Activated CD4-positive, alpha-beta T cell treated with anti-CD3 and anti-CD28 coated beads for 36 hours (primary cell): ENCODE measurements at regions of chr20 and their contacts with region 1.

Region 1: GRCh38 chr20:45971675-45972499 is at the start of gene ZNF335:
- DNase-seq: peak; percentile 96
- ATAC-seq: peak; percentile 88
- H3K4me3 Mint-ChIP-seq: peak within 1 kb of the TSS; percentile 94
- H3K27ac Mint-ChIP-seq: peak within 1 kb of the TSS; percentile 98
- H3K4me1 Mint-ChIP-seq: peaks cover 15% of the 10 kb centered on the region
- H3K27me3 Mint-ChIP-seq: no peaks in the 10 kb centered on the region
- total RNA-seq, gene ZNF335: 27.4 to 28.9 TPM

Region 2: GRCh38 chr20:44210422-44211176 is 1761.3 kb before region 1 on chr20 and contains the start of gene OSER1:
- CTCF ChIA-PET with region 1: no interaction called
- POLR2A ChIA-PET with region 1: no interaction called
- intact Hi-C with region 1: loop called in 1 of 2 experiments (anchors 2 kb)
- DNase-seq: peak; percentile 98
- ATAC-seq: peak; percentile 82
- H3K4me3 Mint-ChIP-seq: peak within 1 kb of the TSS; percentile 94
- H3K27ac Mint-ChIP-seq: peak within 1 kb of the TSS; percentile 92
- H3K4me1 Mint-ChIP-seq: peaks cover 48% of the 10 kb centered on the region
- H3K27me3 Mint-ChIP-seq: no peaks in the 10 kb centered on the region
- total RNA-seq, gene OSER1: 19.9 to 22.5 TPM

Region 3: GRCh38 chr20:45647441-45648050 is 324.3 kb before region 1 on chr20:
- CTCF ChIA-PET with region 1: no interaction called
- POLR2A ChIA-PET with region 1: no interaction called
- intact Hi-C with region 1: no loop called
- DNase-seq: no peak
- ATAC-seq: no peak
- H3K4me3 Mint-ChIP-seq: no peak overlapping the region
- H3K27ac Mint-ChIP-seq: no peak overlapping the region
- H3K4me1 Mint-ChIP-seq: no peaks in the 10 kb centered on the region
- H3K27me3 Mint-ChIP-seq: peaks cover 7% of the 10 kb centered on the region

Region 4: GRCh38 chr20:45792332-45792686 is 179.6 kb before region 1 on chr20:
- CTCF ChIA-PET with region 1: no interaction called
- POLR2A ChIA-PET with region 1: interaction called, 3 read pairs
- intact Hi-C with region 1: loop called in 1 of 2 experiments (anchors 2 kb)
- DNase-seq: peak; percentile 12
- ATAC-seq: peak; percentile 2
- H3K4me3 Mint-ChIP-seq: peak overlapping the region; percentile 81
- H3K27ac Mint-ChIP-seq: peak overlapping the region; percentile 80
- H3K4me1 Mint-ChIP-seq: peaks cover 13% of the 10 kb centered on the region
- H3K27me3 Mint-ChIP-seq: no peaks in the 10 kb centered on the region

Region 5: DNA sequence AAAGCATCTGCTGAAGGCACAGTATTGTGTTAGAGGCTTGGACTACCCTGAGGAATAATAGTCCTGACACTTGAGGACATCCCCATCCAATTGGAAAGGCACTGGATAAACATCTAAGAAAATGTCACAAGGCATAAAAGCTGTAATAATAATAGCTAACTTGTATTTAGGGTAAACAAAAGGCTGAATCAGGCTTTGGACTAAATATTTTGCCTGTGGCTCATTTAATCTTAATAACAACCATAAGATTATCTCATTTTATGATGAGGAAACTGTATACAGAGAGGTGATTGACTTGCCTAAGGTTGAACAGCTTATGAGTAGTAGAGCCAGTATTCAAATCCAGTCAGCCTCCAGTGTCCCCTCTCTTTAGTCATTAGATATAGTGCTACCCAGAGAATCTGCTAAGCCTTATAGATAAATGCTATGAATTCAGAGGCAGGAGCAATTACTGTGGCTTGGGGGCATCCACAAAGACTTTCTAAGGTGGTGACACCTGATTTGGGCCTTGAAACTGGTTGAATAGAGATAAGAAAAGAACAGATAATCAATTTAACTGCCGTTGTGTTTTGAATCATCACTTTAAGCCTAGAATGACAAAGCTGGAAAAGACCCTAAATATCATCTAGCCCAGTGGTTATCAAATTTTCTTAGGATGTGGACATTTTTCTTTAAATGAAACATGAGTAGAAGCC is 98.3 kb before region 1 on chr20:
- CTCF ChIA-PET with region 1: no interaction called
- POLR2A ChIA-PET with region 1: no interaction called
- intact Hi-C with region 1: no loop called
- DNase-seq: no peak
- ATAC-seq: no peak
- H3K4me3 Mint-ChIP-seq: no peak overlapping the region
- H3K27ac Mint-ChIP-seq: no peak overlapping the region
- H3K4me1 Mint-ChIP-seq: no peaks in the 10 kb centered on the region
- H3K27me3 Mint-ChIP-seq: no peaks in the 10 kb centered on the region

Region 6: GRCh38 chr20:45890985-45891983 is 80.6 kb before region 1 on chr20 and contains the starts of genes CTSA and NEURL2:
- CTCF ChIA-PET with region 1: no interaction called
- POLR2A ChIA-PET with region 1: no interaction called
- intact Hi-C with region 1: loop called (anchors 1 to 2 kb)
- DNase-seq: peak; percentile 94
- ATAC-seq: peak; percentile 80
- H3K4me3 Mint-ChIP-seq: peak within 1 kb of the TSS; percentile 89
- H3K27ac Mint-ChIP-seq: peak within 1 kb of the TSS; percentile 87
- H3K4me1 Mint-ChIP-seq: peaks cover 32% of the 10 kb centered on the region
- H3K27me3 Mint-ChIP-seq: no peaks in the 10 kb centered on the region
- total RNA-seq, gene CTSA: 36.4 to 45.6 TPM
- total RNA-seq, gene NEURL2: 1.2 to 1.9 TPM

Region 7: GRCh38 chr20:45957081-45957941 is 14.6 kb before region 1 on chr20:
- CTCF ChIA-PET with region 1: interaction called, 14 read pairs
- POLR2A ChIA-PET with region 1: interaction called, 12 read pairs
- intact Hi-C with region 1: no loop called
- DNase-seq: no peak
- ATAC-seq: no peak
- H3K4me3 Mint-ChIP-seq: no peak overlapping the region
- H3K27ac Mint-ChIP-seq: no peak overlapping the region
- H3K4me1 Mint-ChIP-seq: no peaks in the 10 kb centered on the region
- H3K27me3 Mint-ChIP-seq: no peaks in the 10 kb centered on the region

Region 8: DNA sequence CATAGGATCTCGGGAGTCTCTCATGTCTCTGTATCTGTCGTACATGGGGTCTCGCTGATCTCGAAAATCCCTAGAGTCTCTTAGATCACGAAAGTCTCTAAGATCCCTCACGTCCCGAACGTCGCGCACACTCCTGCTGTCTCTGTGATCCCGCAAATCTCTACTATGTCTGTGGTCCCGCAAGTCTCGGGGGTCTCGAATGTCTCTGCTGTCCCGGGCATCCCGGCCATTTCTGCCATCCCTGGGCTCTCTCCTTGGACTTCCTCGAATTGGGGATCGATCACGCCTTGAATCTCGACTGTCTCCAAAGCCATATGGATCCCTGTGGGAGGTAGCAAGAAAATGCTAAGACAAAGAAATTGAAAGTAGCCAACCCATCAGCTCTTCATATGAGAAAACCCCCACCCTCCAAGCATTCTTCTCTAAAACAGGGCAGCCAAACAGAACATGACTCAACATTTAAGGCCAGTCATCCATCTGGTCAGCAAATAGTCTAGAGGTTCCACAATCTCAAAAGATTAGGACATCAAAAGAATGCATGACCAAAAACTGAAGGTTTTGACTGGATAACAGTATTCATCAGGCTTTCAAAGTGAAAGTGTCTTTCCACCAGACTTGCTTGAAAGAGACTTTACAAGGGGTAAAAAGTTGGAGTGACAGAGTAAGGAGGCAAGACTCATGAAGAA is 98.5 kb after region 1 on chr20:
- CTCF ChIA-PET with region 1: no interaction called
- POLR2A ChIA-PET with region 1: no interaction called
- intact Hi-C with region 1: no loop called
- DNase-seq: no peak
- ATAC-seq: no peak
- H3K4me3 Mint-ChIP-seq: no peak overlapping the region
- H3K27ac Mint-ChIP-seq: no peak overlapping the region
- H3K4me1 Mint-ChIP-seq: no peaks in the 10 kb centered on the region
- H3K27me3 Mint-ChIP-seq: no peaks in the 10 kb centered on the region

Region 9: DNA sequence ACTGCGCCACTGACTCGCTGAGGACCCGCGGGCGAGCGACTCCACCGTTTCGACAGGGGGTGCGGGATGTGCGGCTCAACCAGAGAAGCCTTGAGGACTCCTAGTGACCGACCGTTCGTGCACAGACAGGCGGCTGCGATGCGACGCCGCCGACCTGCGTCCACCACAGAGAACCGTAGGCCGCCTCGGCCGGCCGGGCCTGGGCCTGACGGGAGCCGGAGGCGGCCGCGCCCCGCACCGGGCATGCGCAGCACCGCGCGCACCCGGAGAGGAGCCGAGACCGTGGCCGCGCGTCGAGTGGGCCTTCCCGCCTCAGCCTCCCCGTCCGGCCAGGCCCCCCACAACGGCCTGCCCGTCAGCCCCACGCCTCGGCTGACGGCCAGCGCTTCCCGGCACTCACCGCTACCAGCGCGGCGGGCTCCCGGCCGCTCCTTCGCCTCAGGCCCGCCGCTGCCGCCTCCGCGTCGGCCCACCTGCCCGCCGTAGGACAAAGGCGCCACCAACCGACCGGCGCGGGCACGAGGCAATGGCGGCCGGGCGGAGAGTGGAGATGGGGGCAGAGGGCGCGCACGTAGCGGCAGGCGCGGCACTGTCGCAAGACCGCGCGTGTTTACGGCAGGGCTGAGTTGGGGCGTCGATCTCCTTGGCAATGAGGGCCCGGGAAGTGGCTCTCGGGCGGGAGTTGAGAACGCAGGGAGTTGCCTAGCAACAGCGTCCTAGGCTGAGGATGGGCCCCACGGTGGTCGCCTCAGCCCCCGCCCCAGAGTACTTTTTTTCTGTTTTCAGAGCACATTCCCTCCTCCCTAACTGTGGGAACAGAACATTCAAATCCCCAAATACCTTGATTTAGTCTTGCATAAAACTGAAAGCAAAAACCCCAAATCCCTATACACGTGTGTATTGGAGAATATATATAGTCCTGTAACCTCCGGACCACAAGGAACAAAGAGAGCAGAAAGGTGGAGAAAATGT is 117.8 kb after region 1 on chr20 and contains the start of gene NCOA5:
- CTCF ChIA-PET with region 1: interaction called, 7 read pairs
- POLR2A ChIA-PET with region 1: no interaction called
- intact Hi-C with region 1: loop called in 1 of 2 experiments (anchors 1 kb)
- DNase-seq: peak; percentile 97
- ATAC-seq: peak; percentile 87
- H3K4me3 Mint-ChIP-seq: peak within 1 kb of the TSS; percentile 86
- H3K27ac Mint-ChIP-seq: peak within 1 kb of the TSS; percentile 88
- H3K4me1 Mint-ChIP-seq: peaks cover 46% of the 10 kb centered on the region
- H3K27me3 Mint-ChIP-seq: no peaks in the 10 kb centered on the region
- total RNA-seq, gene NCOA5: 17.9 to 18.8 TPM

Region 10: DNA sequence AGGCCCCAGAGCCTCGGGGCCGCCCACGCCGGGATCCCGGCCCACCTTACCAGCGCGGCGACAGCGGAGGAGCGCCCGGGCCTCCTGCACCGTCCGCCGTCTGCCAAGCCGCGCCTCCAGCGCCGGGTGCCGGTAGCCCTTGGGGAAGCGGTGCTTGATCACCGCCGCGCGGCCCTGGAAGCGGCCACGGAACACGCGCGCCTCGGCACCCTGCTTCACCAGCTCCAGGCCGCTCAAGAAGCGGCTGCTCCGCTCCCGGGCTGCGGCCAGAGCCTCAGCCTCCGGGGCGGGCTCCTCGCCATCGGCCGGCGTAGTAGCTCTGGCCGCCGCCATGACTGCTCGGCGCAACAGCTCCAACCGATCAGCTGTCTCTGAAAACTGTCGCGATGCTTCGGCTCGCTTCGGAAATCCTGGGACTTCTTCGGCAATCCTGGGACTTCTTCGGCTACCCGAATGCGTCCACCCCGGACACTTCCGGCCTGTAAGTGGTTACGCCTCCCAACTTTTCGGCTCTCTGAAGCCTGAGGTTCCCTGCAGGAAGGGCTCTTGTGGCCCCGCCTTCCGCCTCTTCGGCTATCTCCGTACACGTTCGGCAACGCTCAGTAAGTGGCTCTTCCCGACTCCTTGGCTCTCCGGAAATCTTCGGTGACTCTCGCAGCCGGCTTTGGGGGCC is 717.3 kb after region 1 on chr20 and contains the start of gene TP53RK:
- CTCF ChIA-PET with region 1: no interaction called
- POLR2A ChIA-PET with region 1: no interaction called
- intact Hi-C with region 1: loop called in 1 of 2 experiments (anchors 1 kb)
- DNase-seq: peak; percentile 98
- ATAC-seq: peak; percentile 98
- H3K4me3 Mint-ChIP-seq: peak within 1 kb of the TSS; percentile 91
- H3K27ac Mint-ChIP-seq: peak within 1 kb of the TSS; percentile 95
- H3K4me1 Mint-ChIP-seq: peaks cover 39% of the 10 kb centered on the region
- H3K27me3 Mint-ChIP-seq: no peaks in the 10 kb centered on the region
- total RNA-seq, gene TP53RK: 11.2 to 12.1 TPM

Region 11: GRCh38 chr20:46709459-46710152 is 737.7 kb after region 1 on chr20 and contains the start of gene SLC2A10:
- CTCF ChIA-PET with region 1: no interaction called
- POLR2A ChIA-PET with region 1: no interaction called
- intact Hi-C with region 1: no loop called
- DNase-seq: no peak
- ATAC-seq: no peak
- H3K4me3 Mint-ChIP-seq: peak within 1 kb of the TSS; percentile 24
- H3K27ac Mint-ChIP-seq: no peak within 1 kb of the TSS
- H3K4me1 Mint-ChIP-seq: peaks cover 11% of the 10 kb centered on the region
- H3K27me3 Mint-ChIP-seq: peaks cover 62% of the 10 kb centered on the region
- total RNA-seq, gene SLC2A10: not detected